MCF 10A (cell line): ENCODE measurements at regions of chr2 and their contacts with region 1.

Region 1: GRCh38 chr2:173134703-173135102 is 59.1 kb downstream of the MAP3K20 start:
- DNase-seq: peak; percentile 88
- H3K4me3 Mint-ChIP-seq: peak overlapping the region; percentile 74
- H3K27ac Mint-ChIP-seq: peak overlapping the region; percentile 92
- H3K4me1 Mint-ChIP-seq: peaks cover 63% of the 10 kb centered on the region
- H3K27me3 Mint-ChIP-seq: no peaks in the 10 kb centered on the region
- CTCF ChIP-seq: no peak

Region 2: GRCh38 chr2:173027181-173028128 is 107.2 kb before region 1 on chr2:
- CTCF ChIA-PET with region 1: interaction called, 11 read pairs
- POLR2A ChIA-PET with region 1: interaction called, 11 read pairs
- intact Hi-C with region 1: loop called (anchors 5 kb)
- DNase-seq: peak; percentile 88
- H3K4me3 Mint-ChIP-seq: no peak overlapping the region
- H3K27ac Mint-ChIP-seq: peak overlapping the region; percentile 9
- H3K4me1 Mint-ChIP-seq: peaks cover 12% of the 10 kb centered on the region
- H3K27me3 Mint-ChIP-seq: no peaks in the 10 kb centered on the region
- CTCF ChIP-seq: peak; percentile 79

Region 3: DNA sequence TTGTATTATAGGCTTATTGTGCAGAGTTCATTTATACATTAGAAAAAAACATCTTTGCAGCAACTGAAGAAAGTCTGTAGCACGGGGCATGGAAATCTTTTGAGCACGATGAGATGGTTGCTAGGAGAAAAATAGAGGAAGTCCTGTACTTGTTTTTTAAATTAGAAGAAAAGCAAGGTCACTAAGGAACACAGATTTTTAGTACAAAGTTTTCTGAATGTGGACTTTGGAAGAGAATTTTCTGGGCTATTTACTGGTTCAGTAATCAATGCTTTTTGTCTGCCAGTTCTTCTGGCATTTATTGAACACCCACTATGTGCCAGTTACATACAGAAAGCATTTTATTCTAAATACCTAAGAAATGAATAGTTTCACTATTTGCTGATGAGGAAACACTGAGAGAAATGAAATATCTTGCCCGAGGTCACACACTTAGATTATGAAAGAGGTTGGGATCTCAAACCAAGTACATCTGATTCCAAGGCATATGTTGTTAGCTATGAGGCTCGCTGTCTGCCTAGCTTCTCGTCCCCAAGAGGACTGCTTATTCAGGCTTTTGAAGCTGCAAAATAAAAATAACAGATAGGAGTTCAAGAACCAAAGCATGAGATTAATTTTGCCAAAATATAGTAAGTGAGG is 74.7 kb before region 1 on chr2:
- CTCF ChIA-PET with region 1: no interaction called
- POLR2A ChIA-PET with region 1: interaction called, 10 read pairs
- intact Hi-C with region 1: no loop called
- DNase-seq: peak; percentile 67
- H3K4me3 Mint-ChIP-seq: no peak overlapping the region
- H3K27ac Mint-ChIP-seq: peak overlapping the region; percentile 85
- H3K4me1 Mint-ChIP-seq: peaks cover 30% of the 10 kb centered on the region
- H3K27me3 Mint-ChIP-seq: no peaks in the 10 kb centered on the region
- CTCF ChIP-seq: no peak

Region 4: DNA sequence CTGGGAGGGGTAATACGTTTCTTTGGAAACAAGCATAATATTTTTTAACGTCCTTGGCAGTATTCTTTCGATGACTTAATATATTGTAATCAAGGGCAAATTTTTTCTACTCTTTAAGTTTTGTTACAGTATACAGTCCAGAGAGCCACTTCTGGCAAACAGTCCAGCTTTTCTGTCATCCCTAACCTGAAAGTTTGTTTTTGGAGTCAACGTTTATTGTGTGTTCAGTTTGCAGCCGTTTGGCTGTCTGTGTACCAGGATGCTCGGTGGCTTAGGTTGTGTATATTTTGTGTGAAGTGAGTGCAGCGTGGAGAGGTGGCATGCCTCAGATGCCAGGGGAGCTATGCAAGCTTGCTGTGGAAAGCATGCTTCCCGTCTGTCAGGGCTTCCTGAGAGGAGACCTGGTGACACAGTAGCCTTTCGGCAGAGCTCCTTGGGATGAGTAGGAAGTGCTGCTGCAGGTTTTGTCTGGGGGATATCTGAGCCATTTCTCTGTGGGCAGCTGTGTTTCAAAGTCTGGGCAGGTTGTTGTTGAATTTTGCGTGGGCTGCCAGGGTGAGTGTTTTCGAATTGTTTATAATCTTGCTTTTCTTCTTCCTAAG is 44.3 kb before region 1 on chr2:
- CTCF ChIA-PET with region 1: interaction called, 3 read pairs
- POLR2A ChIA-PET with region 1: interaction called, 14 read pairs
- intact Hi-C with region 1: no loop called
- DNase-seq: no peak
- H3K4me3 Mint-ChIP-seq: peak overlapping the region; percentile 24
- H3K27ac Mint-ChIP-seq: peak overlapping the region; percentile 65
- H3K4me1 Mint-ChIP-seq: peaks cover 18% of the 10 kb centered on the region
- H3K27me3 Mint-ChIP-seq: no peaks in the 10 kb centered on the region
- CTCF ChIP-seq: no peak

Region 5: GRCh38 chr2:173124441-173124840 is 10.3 kb before region 1 on chr2:
- CTCF ChIA-PET with region 1: interaction called, 5 read pairs
- POLR2A ChIA-PET with region 1: interaction called, 110 read pairs
- intact Hi-C with region 1: loop called (anchors 2 kb)
- DNase-seq: peak; percentile 94
- H3K4me3 Mint-ChIP-seq: peak overlapping the region; percentile 43
- H3K27ac Mint-ChIP-seq: peak overlapping the region; percentile 89
- H3K4me1 Mint-ChIP-seq: peaks cover 58% of the 10 kb centered on the region
- H3K27me3 Mint-ChIP-seq: no peaks in the 10 kb centered on the region
- CTCF ChIP-seq: no peak

Region 6: DNA sequence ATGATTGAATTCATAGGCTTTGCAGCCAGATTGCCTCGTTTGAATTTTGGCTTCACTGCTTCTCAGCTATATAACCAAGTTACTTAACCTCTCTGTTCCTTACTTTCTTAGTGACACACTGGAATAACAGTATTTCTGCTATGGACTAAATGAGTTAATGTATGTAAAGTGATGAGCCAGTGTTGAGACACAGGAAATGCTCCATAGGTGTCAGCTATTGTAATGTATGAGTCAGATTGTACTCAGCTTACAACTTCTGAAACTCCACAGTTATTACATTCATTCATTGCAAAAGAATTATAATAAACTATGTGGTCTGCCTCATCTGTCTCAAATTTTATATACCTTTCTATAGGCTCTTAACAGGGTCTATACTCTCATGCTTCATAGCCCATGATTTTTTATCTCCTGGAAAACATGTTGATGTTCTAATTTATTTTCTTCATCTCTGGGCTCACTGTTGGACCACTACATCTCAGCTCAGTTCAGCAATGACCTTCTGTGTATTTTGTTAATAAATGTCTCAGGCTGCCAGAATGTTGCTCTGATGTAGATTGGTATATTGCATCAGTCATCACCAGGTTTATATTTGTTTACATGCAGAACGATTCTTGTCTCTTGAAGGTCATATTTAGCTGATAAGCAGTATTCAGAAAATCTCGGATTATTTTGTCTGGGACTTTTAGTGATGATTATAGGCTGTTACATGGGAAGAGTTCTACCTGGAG is 17.1 kb after region 1 on chr2:
- CTCF ChIA-PET with region 1: interaction called, 6 read pairs
- POLR2A ChIA-PET with region 1: interaction called, 212 read pairs
- intact Hi-C with region 1: no loop called
- DNase-seq: peak; percentile 92
- H3K4me3 Mint-ChIP-seq: peak overlapping the region; percentile 24
- H3K27ac Mint-ChIP-seq: peak overlapping the region; percentile 91
- H3K4me1 Mint-ChIP-seq: peaks cover 56% of the 10 kb centered on the region
- H3K27me3 Mint-ChIP-seq: no peaks in the 10 kb centered on the region
- CTCF ChIP-seq: no peak

Region 7: DNA sequence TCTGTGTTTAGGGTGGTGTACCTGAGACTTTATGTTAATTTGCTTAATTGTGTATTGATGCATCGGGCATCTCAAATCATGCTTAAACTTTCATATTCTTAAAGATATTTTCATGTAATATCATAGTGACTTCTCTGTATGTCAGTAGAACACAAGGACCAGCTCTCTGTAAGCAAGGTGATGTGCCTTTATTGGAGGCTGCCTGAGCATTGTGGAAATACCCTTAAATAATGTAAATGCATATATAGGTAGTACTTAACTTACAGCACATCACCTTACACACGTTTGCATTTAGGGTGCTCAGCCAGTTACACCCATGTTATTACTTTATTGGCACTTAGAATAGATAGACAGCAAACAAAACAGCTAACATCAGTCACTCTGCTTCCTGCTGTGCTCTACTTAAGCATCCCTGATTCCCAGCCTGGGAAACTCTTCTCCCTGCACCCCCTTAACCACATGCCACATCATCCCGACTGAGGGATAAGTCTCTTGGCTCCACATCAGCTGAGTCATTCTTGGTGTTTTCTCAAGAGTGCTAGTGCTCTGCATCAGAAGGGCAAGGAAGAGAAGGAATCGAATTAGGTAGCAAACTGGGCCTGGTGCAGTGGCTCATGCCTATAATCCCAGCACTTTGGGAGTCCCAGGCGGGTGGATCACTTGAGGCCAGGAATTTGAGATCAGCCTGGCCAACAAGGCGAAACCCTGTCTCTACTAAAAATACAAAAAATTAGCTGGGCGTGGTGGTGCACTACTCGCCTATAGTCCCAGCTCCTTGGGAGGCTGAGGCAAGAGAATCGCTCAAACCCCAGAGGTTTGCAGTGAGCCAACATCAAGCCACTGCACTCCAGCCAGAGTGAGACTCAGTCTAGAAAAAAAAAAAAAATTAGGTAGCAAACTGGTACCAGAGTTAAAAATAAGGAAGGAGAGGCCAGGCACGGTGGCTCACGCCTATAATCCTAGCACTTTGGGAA is 49.6 kb after region 1 on chr2:
- CTCF ChIA-PET with region 1: no interaction called
- POLR2A ChIA-PET with region 1: interaction called, 5 read pairs
- intact Hi-C with region 1: loop called (anchors 5 kb)
- DNase-seq: peak; percentile 99
- H3K4me3 Mint-ChIP-seq: no peak overlapping the region
- H3K27ac Mint-ChIP-seq: peak overlapping the region; percentile 1
- H3K4me1 Mint-ChIP-seq: peaks cover 23% of the 10 kb centered on the region
- H3K27me3 Mint-ChIP-seq: no peaks in the 10 kb centered on the region
- CTCF ChIP-seq: no peak